GM12878 (cell line): ENCODE measurements at regions of chr2 and their contacts with region 1.

Region 1: GRCh38 chr2:72579591-72580180 is 246.1 kb downstream of the EXOC6B start:
- DNase-seq: no peak
- ATAC-seq: peak; percentile 71
- H3K4me3 ChIP-seq: no peak overlapping the region
- H3K27ac ChIP-seq: no peak overlapping the region
- H3K4me1 ChIP-seq: no peaks in the 10 kb centered on the region
- H3K27me3 ChIP-seq: no peaks in the 10 kb centered on the region
- CTCF ChIP-seq: peak; percentile 44 to 71 (median 53); a peak in 5 of 6 replicates
- EP300 ChIP-seq: no peak
- POLR2A ChIP-seq: no peak
- RAD21 ChIP-seq: peak; percentile 78

Region 2: DNA sequence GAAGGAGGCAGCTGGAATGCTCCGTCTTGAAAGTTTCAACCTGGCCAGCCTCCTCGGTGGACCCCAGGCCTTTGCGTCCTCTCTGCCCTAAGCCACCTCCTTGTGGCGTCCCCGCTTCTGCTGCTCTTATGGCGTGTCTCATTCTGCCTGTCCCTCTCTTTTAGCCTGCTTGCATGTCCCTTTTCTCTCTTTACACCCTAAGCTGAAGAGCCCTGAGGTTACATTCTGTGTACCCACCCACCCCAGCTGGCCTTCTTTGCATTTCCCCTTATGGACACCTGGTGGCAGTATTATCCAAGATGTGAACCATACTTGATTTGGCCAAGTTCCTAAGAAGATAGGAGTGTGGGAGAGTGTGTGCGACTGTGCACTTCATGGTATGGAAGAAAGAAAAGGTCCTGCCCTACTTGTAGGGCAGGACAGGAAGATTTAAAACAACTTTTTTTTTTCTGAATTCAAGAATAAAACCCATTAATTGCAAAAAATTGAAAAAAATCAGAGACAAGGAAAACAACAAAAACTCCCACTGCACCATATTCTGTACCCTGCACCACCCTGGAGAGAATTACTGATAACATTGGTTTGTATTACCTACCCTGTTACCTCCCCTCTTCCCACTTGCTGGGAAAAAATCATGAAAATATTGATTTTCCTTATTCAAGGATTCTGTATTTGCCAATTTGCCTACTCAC is 1048.9 kb before region 1 on chr2:
- CTCF ChIA-PET with region 1: interaction called, 3 read pairs
- POLR2A ChIA-PET with region 1: no interaction called
- RAD21 ChIA-PET with region 1: no interaction called
- SMC1A ChIA-PET with region 1: no interaction called
- in situ Hi-C with region 1: loop called (anchors 10 kb)
- intact Hi-C with region 1: loop called (anchors 5 kb)
- DNase-seq: no peak
- ATAC-seq: peak; percentile 87
- H3K4me3 ChIP-seq: no peak overlapping the region
- H3K27ac ChIP-seq: no peak overlapping the region
- H3K4me1 ChIP-seq: no peaks in the 10 kb centered on the region
- H3K27me3 ChIP-seq: peaks cover 0 to 1% of the 10 kb centered on the region in 2 experiments; a peak in 2 of 4 replicates
- CTCF ChIP-seq: peak; percentile 56 to 66 (median 65); a peak in 5 of 6 replicates
- EP300 ChIP-seq: no peak
- POLR2A ChIP-seq: no peak
- RAD21 ChIP-seq: peak; percentile 65

Region 3: GRCh38 chr2:71545572-71546274 is 1034.0 kb before region 1 on chr2:
- CTCF ChIA-PET with region 1: no interaction called
- POLR2A ChIA-PET with region 1: no interaction called
- RAD21 ChIA-PET with region 1: no interaction called
- SMC1A ChIA-PET with region 1: no interaction called
- in situ Hi-C with region 1: no loop called
- intact Hi-C with region 1: loop called (anchors 2 kb)
- DNase-seq: no peak
- ATAC-seq: peak; percentile 94
- H3K4me3 ChIP-seq: no peak overlapping the region
- H3K27ac ChIP-seq: no peak overlapping the region
- H3K4me1 ChIP-seq: no peaks in the 10 kb centered on the region
- H3K27me3 ChIP-seq: peaks cover 0 to 4% of the 10 kb centered on the region in 2 experiments; a peak in 2 of 4 replicates
- CTCF ChIP-seq: peak; percentile 59 to 86 (median 80)
- EP300 ChIP-seq: no peak
- POLR2A ChIP-seq: no peak
- RAD21 ChIP-seq: peak; percentile 78

Region 4: GRCh38 chr2:72150157-72150865 is 429.4 kb before region 1 on chr2:
- CTCF ChIA-PET with region 1: interaction called, 10 read pairs
- POLR2A ChIA-PET with region 1: no interaction called
- RAD21 ChIA-PET with region 1: interaction called, 4 read pairs
- SMC1A ChIA-PET with region 1: interaction called, 4 read pairs
- in situ Hi-C with region 1: no loop called
- intact Hi-C with region 1: loop called (anchors 1 kb)
- DNase-seq: peak; percentile 5
- ATAC-seq: peak; percentile 92
- H3K4me3 ChIP-seq: no peak overlapping the region
- H3K27ac ChIP-seq: no peak overlapping the region
- H3K4me1 ChIP-seq: no peaks in the 10 kb centered on the region
- H3K27me3 ChIP-seq: peaks cover 14% of the 10 kb centered on the region in 2 experiments; a peak in 3 of 4 replicates
- CTCF ChIP-seq: peak; percentile 68 to 77 (median 73)
- EP300 ChIP-seq: no peak
- POLR2A ChIP-seq: no peak
- RAD21 ChIP-seq: peak; percentile 73

Region 5: GRCh38 chr2:72325592-72326422 is 253.9 kb before region 1 on chr2:
- CTCF ChIA-PET with region 1: no interaction called
- POLR2A ChIA-PET with region 1: no interaction called
- RAD21 ChIA-PET with region 1: no interaction called
- SMC1A ChIA-PET with region 1: no interaction called
- in situ Hi-C with region 1: no loop called
- intact Hi-C with region 1: loop called (anchors 5 kb)
- DNase-seq: no peak
- ATAC-seq: peak; percentile 85
- H3K4me3 ChIP-seq: no peak overlapping the region
- H3K27ac ChIP-seq: no peak overlapping the region
- H3K4me1 ChIP-seq: no peaks in the 10 kb centered on the region
- H3K27me3 ChIP-seq: no peaks in the 10 kb centered on the region
- CTCF ChIP-seq: peak; percentile 56 to 81 (median 76)
- EP300 ChIP-seq: no peak
- POLR2A ChIP-seq: no peak
- RAD21 ChIP-seq: peak; percentile 49

Region 6: DNA sequence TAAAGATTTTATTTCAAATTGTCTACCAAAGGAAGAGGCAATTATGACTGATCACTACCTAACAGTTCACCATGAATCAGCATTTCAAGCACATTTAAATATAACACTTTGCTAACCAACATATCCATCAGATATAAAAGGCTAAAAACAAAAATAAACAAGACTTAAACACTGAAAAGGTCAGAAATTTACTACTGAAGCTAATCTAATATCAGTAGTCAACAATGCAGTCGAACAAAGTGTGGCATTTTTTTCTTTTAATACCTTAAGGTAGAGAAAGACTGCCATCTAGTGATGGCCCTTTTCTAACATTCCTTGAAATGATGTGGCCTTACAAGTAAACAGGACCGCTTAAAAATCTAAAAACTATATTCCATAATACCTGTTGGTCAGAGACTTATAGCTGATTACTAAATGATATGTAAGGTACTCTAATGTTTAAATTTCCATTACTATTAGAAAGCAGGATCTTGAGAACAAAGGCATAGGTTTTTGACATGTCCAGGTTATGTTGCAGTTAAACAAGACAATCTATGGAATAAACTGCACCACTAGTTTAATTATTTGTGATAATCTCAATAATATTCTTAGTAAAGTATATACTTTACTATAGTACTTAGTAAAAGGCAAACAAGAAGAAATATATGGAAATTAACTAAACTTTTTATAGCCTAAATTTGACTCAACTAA is 166.1 kb after region 1 on chr2:
- CTCF ChIA-PET with region 1: interaction called, 4 read pairs
- POLR2A ChIA-PET with region 1: no interaction called
- RAD21 ChIA-PET with region 1: no interaction called
- SMC1A ChIA-PET with region 1: no interaction called
- in situ Hi-C with region 1: no loop called
- intact Hi-C with region 1: loop called (anchors 5 kb)
- DNase-seq: no peak
- ATAC-seq: peak; percentile 52; the same call in 2 of the 3 replicates
- H3K4me3 ChIP-seq: no peak overlapping the region
- H3K27ac ChIP-seq: no peak overlapping the region
- H3K4me1 ChIP-seq: no peaks in the 10 kb centered on the region
- H3K27me3 ChIP-seq: no peaks in the 10 kb centered on the region
- CTCF ChIP-seq: peak; percentile 50 to 62 (median 58); a peak in 5 of 6 replicates
- EP300 ChIP-seq: no peak
- POLR2A ChIP-seq: no peak
- RAD21 ChIP-seq: peak; percentile 70

Region 7: DNA sequence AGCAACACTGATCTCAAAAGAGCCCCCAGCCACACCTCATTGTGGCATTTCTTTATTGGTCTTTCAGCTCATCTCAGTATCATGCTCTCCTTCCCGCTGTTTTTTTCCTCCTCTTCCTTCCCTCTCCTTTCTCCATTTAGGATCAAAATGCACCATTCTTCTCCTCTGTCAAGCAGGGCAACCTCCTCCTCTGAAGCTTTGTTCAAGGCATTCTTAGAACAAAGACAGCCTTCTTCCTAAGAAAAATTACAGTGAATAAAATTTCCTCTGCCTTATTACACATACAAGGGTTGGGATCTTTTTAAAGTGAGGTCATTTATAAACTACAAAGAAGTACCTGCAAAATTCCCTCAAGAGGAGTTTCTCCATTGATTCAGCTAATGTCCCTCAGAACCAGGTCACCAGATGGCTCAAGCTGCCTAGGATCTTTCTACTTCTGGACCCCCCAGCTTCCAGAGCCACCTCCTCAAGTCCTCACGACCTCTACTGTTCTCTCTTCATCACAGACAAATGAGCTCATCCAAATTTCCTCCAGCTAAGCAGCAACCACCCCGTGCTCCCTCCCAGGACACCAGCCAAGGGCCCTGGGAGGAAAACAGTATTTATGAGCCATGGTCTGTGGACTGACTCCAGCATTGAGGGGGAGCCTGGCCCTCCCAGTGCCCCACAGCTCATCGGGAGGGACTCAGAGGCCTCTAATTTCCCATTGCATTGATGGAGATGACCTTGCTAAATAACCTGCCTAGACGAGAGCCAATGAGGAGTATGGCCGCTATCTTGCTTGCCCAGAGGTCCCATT is 473.8 kb after region 1 on chr2:
- CTCF ChIA-PET with region 1: no interaction called
- POLR2A ChIA-PET with region 1: no interaction called
- RAD21 ChIA-PET with region 1: no interaction called
- SMC1A ChIA-PET with region 1: no interaction called
- in situ Hi-C with region 1: no loop called
- intact Hi-C with region 1: no loop called
- DNase-seq: no peak
- ATAC-seq: no peak
- H3K4me3 ChIP-seq: no peak overlapping the region
- H3K27ac ChIP-seq: no peak overlapping the region
- H3K4me1 ChIP-seq: no peaks in the 10 kb centered on the region
- H3K27me3 ChIP-seq: no peaks in the 10 kb centered on the region
- CTCF ChIP-seq: no peak
- EP300 ChIP-seq: no peak
- POLR2A ChIP-seq: no peak
- RAD21 ChIP-seq: no peak